ENCODE measurements at regions of chr6 and their contacts with region 1.

Region 1: GRCh38 chr6:44475779-44476434 is 88.4 kb downstream of the CDC5L start:
- DNase-seq: peak; percentile 88
- H3K4me3 ChIP-seq: no peak overlapping the region
- H3K27ac ChIP-seq: peak overlapping the region in 1 of 4 donors; percentile 25
- H3K4me1 ChIP-seq: peaks cover 0 to 14% (median 8%) of the 10 kb centered on the region in 4 donors
- H3K27me3 ChIP-seq: peaks cover 0 to 12% (median 0%) of the 10 kb centered on the region in 3 donors
- CTCF ChIP-seq: peak; percentile 76 to 92 (median 89)
- EP300 ChIP-seq: no peak
- POLR2A ChIP-seq: no peak

Region 2: GRCh38 chr6:45714741-45715507 is 1239.0 kb after region 1 on chr6:
- intact Hi-C with region 1: loop called (anchors 5 kb)
- DNase-seq: peak; percentile 77
- H3K4me3 ChIP-seq: no peak overlapping the region
- H3K27ac ChIP-seq: peak overlapping the region in 1 of 4 donors; percentile 5
- H3K4me1 ChIP-seq: peaks cover 0 to 16% (median 10%) of the 10 kb centered on the region in 4 donors
- H3K27me3 ChIP-seq: no peaks in the 10 kb centered on the region
- CTCF ChIP-seq: peak; percentile 75 to 80 (median 78)
- EP300 ChIP-seq: no peak
- POLR2A ChIP-seq: no peak

Region 3: DNA sequence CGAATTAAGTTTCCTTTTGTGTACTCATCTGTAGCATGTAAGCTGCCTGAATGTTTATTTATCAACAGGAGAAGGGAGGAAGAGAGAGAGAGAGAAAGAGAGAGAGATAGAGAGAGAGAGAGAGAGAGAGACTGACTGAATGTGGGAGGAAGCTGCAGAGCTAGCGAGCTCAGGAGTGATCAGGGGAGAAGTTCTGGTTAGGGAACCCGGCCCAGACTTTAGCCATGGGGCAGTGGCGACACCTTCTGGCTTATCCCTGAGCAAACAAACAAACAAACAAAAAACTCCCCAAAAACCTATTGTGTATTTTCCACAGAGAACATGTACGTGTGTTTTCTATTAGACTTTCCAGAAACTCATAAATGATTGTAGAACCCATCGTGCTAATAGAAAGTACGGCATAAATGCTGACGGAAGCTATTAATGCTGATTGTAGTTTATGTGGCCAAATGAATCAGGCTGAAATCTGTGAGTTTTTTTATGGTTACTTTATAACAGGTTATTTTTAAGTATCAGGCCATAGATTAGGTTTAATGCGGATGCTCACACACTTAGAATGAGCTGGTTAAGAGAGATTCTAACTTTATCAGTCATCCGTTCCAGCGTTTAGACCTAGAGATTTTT is 1446.9 kb after region 1 on chr6:
- intact Hi-C with region 1: loop called (anchors 5 kb)
- DNase-seq: peak; percentile 87
- H3K4me3 ChIP-seq: no peak overlapping the region
- H3K27ac ChIP-seq: no peak overlapping the region
- H3K4me1 ChIP-seq: no peaks in the 10 kb centered on the region
- H3K27me3 ChIP-seq: no peaks in the 10 kb centered on the region
- CTCF ChIP-seq: peak; percentile 41 to 44 (median 44)
- EP300 ChIP-seq: no peak
- POLR2A ChIP-seq: no peak